Ovary (tissue), 10 donors: ENCODE measurements at regions of chr17 and their contacts with region 1.

Region 1: GRCh38 chr17:9890124-9890523 is 14.9 kb downstream of the RCVRN start:
- DNase-seq: no peak
- H3K4me3 ChIP-seq: no peak overlapping the region
- H3K27ac ChIP-seq: no peak overlapping the region
- H3K4me1 ChIP-seq: no peaks in the 10 kb centered on the region
- H3K27me3 ChIP-seq: no peaks in the 10 kb centered on the region
- CTCF ChIP-seq: no peak
- EP300 ChIP-seq: no peak
- POLR2A ChIP-seq: no peak

Region 2: GRCh38 chr17:9575381-9576101 is 314.6 kb before region 1 on chr17 and contains the start of gene STX8:
- intact Hi-C with region 1: no loop called
- DNase-seq: peak; percentile 83 to 94 (median 88)
- H3K4me3 ChIP-seq: peak within 1 kb of the TSS; percentile 93
- H3K27ac ChIP-seq: no peak within 1 kb of the TSS
- H3K4me1 ChIP-seq: peaks cover 8% of the 10 kb centered on the region
- H3K27me3 ChIP-seq: no peaks in the 10 kb centered on the region
- CTCF ChIP-seq: peak in 1 of 3 donors; percentile 10
- EP300 ChIP-seq: no peak
- POLR2A ChIP-seq: no peak
- total RNA-seq, gene STX8: 45.2 to 67.8 (median 53.8) TPM

Region 3: DNA sequence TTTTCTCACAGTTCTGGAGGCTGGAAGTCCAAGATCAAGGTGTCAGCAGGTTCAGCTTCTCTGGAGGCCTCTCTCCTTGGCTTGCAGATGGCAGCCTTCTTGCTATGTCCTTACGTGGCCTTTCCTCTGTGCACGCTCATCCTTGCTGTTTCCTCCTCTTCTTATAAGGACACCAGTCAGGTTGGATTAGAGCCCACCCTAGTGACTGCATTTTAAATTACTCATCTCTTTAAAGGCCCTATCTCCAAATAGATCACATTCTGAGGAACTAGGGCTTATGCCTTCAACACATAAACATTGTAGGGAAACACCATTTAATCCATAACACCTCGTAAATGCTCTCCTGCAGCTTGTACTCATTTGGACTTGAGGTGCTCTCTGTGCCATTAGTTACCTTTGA is 135.0 kb before region 1 on chr17:
- intact Hi-C with region 1: loop called in 1 of 4 experiments (anchors 10 kb)
- DNase-seq: no peak
- H3K4me3 ChIP-seq: no peak overlapping the region
- H3K27ac ChIP-seq: no peak overlapping the region
- H3K4me1 ChIP-seq: no peaks in the 10 kb centered on the region
- H3K27me3 ChIP-seq: no peaks in the 10 kb centered on the region
- CTCF ChIP-seq: no peak
- EP300 ChIP-seq: no peak
- POLR2A ChIP-seq: no peak

Region 4: DNA sequence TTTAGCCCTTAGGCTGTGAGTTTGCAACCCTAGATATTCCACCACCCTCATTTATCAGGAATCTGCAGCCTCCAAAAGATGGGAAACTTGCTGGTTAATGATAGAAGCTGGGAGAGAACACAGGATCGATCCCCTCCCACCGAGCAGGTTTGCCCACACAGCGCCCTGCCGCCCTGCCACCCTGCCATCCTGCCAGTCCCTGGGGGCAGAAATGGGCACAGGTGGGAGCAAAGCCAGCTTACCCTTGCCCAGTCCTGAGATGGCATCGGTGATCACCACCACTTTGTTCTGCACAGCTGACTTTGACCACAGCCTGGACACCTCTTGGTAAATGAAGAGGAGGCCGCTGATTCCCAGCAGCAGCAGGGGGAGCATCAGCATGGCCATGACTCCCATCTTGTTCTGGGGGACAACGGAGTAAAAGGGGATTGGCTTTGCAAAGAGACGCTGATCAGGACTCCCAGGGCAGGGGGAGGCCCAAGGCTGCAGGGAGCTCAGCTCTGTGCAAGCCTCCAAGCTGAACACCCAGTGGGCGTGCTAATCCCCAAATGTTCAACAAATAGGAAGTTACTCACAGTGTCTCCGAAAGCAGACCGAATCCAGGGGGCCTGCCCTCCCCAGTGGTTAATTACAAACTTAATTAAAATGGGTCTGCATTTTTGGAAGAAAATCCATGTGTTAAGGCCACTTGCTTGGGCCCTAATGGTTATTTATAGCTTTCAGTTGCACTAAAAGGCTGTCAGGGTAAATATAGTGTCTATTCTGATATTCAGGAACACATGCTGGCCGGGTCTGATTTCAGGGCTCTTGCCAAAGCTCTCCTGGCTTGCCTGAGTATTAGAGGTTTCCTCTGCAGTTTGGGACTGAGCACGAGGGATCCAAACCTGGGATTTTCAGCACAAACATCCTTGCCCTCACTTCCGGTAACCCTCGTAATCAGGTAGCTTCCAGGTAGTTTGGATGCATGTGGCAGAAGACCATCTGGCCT is 98.9 kb before region 1 on chr17 and contains the start of gene DHRS7C:
- intact Hi-C with region 1: loop called in 1 of 4 experiments (anchors 10 kb)
- DNase-seq: peak in 1 of 5 donors; percentile 31
- H3K4me3 ChIP-seq: no peak within 1 kb of the TSS
- H3K27ac ChIP-seq: no peak within 1 kb of the TSS
- H3K4me1 ChIP-seq: no peaks in the 10 kb centered on the region
- H3K27me3 ChIP-seq: no peaks in the 10 kb centered on the region
- CTCF ChIP-seq: no peak
- EP300 ChIP-seq: no peak
- POLR2A ChIP-seq: no peak
- total RNA-seq, gene DHRS7C: not detected

Region 5: GRCh38 chr17:9842057-9842758 is 47.9 kb before region 1 on chr17:
- intact Hi-C with region 1: no loop called
- DNase-seq: peak; percentile 73 to 81 (median 78)
- H3K4me3 ChIP-seq: no peak overlapping the region
- H3K27ac ChIP-seq: peak overlapping the region; percentile 51 to 63
- H3K4me1 ChIP-seq: peaks cover 17% of the 10 kb centered on the region
- H3K27me3 ChIP-seq: no peaks in the 10 kb centered on the region
- CTCF ChIP-seq: no peak
- EP300 ChIP-seq: no peak
- POLR2A ChIP-seq: no peak

Region 6: GRCh38 chr17:9875441-9875840 is 14.7 kb before region 1 on chr17:
- intact Hi-C with region 1: no loop called
- DNase-seq: no peak
- H3K4me3 ChIP-seq: no peak overlapping the region
- H3K27ac ChIP-seq: no peak overlapping the region
- H3K4me1 ChIP-seq: peaks cover 8% of the 10 kb centered on the region
- H3K27me3 ChIP-seq: no peaks in the 10 kb centered on the region
- CTCF ChIP-seq: no peak
- EP300 ChIP-seq: no peak
- POLR2A ChIP-seq: no peak

Region 7: DNA sequence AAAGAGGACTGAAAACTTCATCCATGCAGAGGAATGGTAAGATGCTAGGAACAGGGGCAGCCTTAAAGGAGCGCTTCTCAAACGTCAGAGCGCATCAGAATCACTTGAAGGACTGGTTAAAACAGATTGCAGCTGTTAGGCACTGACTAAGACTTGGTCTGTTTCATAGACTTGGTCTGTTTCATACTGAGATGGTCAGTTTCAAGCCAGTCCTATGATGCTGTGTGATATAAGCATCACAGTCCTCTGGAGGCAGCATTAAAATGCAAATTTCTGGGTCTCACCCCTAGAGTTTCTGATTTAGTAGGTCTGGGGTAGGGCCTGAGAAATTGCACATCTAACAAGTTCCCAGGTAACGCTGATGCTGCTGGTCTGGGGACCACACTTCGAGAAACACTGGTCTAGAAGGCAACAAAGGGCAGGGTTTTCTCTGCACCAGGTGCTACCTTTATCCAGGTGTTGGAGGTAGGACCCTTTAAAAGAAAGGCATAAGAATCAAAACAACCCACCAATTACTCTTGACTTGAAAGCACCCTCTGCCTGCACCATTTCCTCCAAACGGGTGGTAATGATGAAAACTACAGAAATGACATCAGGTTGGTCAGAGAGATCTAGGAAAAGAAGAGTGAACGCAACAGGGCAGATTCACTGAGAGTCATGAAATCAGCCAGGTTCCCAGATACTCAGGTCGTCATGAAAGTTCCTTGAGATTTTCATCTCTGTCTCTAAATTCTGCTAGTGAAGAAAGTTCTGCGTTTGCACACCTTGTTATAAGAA is 110.0 kb after region 1 on chr17:
- intact Hi-C with region 1: no loop called
- DNase-seq: no peak
- H3K4me3 ChIP-seq: no peak overlapping the region
- H3K27ac ChIP-seq: no peak overlapping the region
- H3K4me1 ChIP-seq: peaks cover 6% of the 10 kb centered on the region
- H3K27me3 ChIP-seq: no peaks in the 10 kb centered on the region
- CTCF ChIP-seq: no peak
- EP300 ChIP-seq: no peak
- POLR2A ChIP-seq: no peak